Stomach (tissue), 19 donors: ENCODE measurements at regions of chr4 and their contacts with region 1.

Region 1: GRCh38 chr4:140153718-140154571 is at the start of gene MAML3:
- DNase-seq: peak; percentile 96 to 98
- H3K4me3 ChIP-seq: peak within 1 kb of the TSS; percentile 68 to 81 (median 74)
- H3K27ac ChIP-seq: peak within 1 kb of the TSS; percentile 97 to 100 (median 98)
- H3K4me1 ChIP-seq: peaks cover 0 to 44% (median 32%) of the 10 kb centered on the region in 4 donors
- H3K27me3 ChIP-seq: no peaks in the 10 kb centered on the region
- CTCF ChIP-seq: no peak
- EP300 ChIP-seq: no peak
- POLR2A ChIP-seq: peak in 2 of 4 donors; percentile 36 to 57
- total RNA-seq, gene MAML3: 6.6 to 20.3 (median 13.4) TPM

Region 2: GRCh38 chr4:140069066-140069465 is 84.9 kb before region 1 on chr4:
- intact Hi-C with region 1: loop called (anchors 10 kb)
- DNase-seq: peak in 1 of 2 donors; percentile 46
- H3K4me3 ChIP-seq: no peak overlapping the region
- H3K27ac ChIP-seq: no peak overlapping the region
- H3K4me1 ChIP-seq: peaks cover 6 to 56% (median 29%) of the 10 kb centered on the region in 4 donors
- H3K27me3 ChIP-seq: no peaks in the 10 kb centered on the region
- CTCF ChIP-seq: no peak
- EP300 ChIP-seq: no peak
- POLR2A ChIP-seq: no peak

Region 3: DNA sequence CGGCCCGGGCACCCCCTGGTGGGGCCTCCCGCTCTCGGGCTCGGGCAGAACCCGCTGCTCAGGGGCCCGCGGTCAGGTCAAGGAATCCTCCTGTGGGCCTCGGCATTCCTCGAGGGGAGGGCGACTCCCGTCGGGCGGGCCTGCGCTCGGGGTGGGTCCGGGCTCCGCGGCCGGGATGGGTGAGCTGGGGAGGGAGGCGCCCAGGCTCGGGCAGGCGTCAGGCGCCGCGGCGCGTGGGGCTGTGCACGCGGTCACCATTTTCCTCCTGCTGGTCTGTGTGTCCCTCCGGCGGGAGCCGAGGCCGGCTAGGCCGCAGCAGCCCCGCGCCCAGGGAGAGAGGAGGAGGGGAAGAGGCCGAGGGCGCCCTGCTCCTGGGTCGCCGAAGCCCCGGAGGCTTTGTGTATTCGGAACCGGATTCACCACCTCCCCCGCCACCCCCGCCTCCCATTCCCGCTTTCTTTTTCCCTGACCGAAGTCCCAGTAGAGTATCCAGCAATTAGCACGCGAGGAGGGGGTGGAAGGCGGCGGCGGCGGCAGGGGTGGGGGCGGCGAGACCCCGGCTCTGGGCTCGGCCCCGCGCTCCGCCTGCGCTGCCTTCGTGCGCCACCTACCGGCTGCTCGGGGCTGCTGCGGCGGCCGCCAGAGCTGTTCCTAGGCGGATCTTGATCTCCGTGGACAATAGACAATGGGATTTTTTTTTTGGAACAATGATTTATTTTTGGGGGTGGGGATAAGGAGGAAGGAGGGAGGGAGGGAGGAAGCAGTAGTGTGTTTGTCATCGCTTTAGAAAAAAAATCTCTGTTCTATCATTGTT is 99.0 kb after region 1 on chr4:
- intact Hi-C with region 1: loop called (anchors 5 kb)
- DNase-seq: peak; percentile 74 to 94
- H3K4me3 ChIP-seq: peak overlapping the region; percentile 51 to 75 (median 58)
- H3K27ac ChIP-seq: peak overlapping the region; percentile 89 to 97 (median 92)
- H3K4me1 ChIP-seq: peaks cover 20 to 45% (median 35%) of the 10 kb centered on the region in 4 donors
- H3K27me3 ChIP-seq: no peaks in the 10 kb centered on the region
- CTCF ChIP-seq: peak in 5 of 7 experiments; percentile 64 to 98 (median 94)
- EP300 ChIP-seq: no peak
- POLR2A ChIP-seq: no peak

Region 4: GRCh38 chr4:140609548-140610425 is 455.8 kb after region 1 on chr4:
- intact Hi-C with region 1: no loop called
- DNase-seq: peak in 1 of 2 donors; percentile 77
- H3K4me3 ChIP-seq: no peak overlapping the region
- H3K27ac ChIP-seq: no peak overlapping the region
- H3K4me1 ChIP-seq: peaks cover 0 to 7% (median 3%) of the 10 kb centered on the region in 4 donors
- H3K27me3 ChIP-seq: no peaks in the 10 kb centered on the region
- CTCF ChIP-seq: peak in 5 of 7 experiments; percentile 9 to 43 (median 24)
- EP300 ChIP-seq: no peak
- POLR2A ChIP-seq: no peak